IMR-90 (cell line): ENCODE measurements at regions of chr1 and their contacts with region 1.

Region 1: GRCh38 chr1:186212544-186213226 is 162.4 kb downstream of the TPR start:
- DNase-seq: peak; percentile 97
- ATAC-seq: peak; percentile 94
- H3K4me3 ChIP-seq: no peak overlapping the region
- H3K27ac ChIP-seq: no peak overlapping the region
- H3K4me1 ChIP-seq: peaks cover 5% of the 10 kb centered on the region; the same call in 1 of the 2 replicates
- H3K27me3 ChIP-seq: no peaks in the 10 kb centered on the region
- CTCF ChIP-seq: peak; percentile 97
- POLR2A ChIP-seq: peak; percentile 55; the same call in 1 of the 2 replicates
- RAD21 ChIP-seq: peak; percentile 100

Region 2: DNA sequence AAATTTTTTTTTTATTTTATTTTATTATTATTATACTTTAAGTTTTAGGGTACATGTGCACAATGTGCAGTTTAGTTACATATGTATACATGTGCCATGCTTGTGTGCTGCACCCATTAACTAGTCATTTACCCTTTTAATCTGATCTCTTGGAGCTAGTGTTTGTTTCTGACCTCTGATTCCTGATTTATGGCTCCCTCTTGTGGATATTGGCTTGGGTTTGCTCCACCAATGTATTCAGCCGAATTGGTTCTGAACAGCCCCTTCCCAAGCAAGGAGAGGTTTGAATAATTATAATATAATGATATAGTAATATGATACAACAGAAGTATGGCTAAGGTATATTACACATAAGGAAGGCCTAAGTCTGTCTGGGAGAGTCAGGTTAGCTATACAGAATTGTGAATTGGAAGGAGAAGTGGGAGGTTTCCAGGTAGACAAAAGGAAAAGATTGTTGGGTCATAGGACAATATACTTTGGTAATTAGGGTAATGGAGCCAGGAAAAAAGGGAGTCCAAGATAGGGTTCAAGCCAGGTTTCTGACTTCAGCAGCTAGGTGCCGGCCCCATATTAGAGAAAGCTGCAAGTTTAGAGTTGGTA is 531.6 kb before region 1 on chr1:
- CTCF ChIA-PET with region 1: interaction called, 3 read pairs
- POLR2A ChIA-PET with region 1: no interaction called
- dilution Hi-C with region 1: no loop called
- in situ Hi-C with region 1: no loop called
- intact Hi-C with region 1: loop called (anchors 1 kb)
- DNase-seq: peak; percentile 44
- ATAC-seq: peak; percentile 71
- H3K4me3 ChIP-seq: no peak overlapping the region
- H3K27ac ChIP-seq: no peak overlapping the region
- H3K4me1 ChIP-seq: no peaks in the 10 kb centered on the region
- H3K27me3 ChIP-seq: no peaks in the 10 kb centered on the region
- CTCF ChIP-seq: peak; percentile 67
- POLR2A ChIP-seq: no peak
- RAD21 ChIP-seq: peak; percentile 67

Region 3: GRCh38 chr1:185720633-185721272 is 491.9 kb before region 1 on chr1:
- CTCF ChIA-PET with region 1: interaction called, 9 read pairs
- POLR2A ChIA-PET with region 1: no interaction called
- dilution Hi-C with region 1: no loop called
- in situ Hi-C with region 1: loop called (anchors 10 kb)
- intact Hi-C with region 1: loop called (anchors 1 kb)
- DNase-seq: peak; percentile 64
- ATAC-seq: peak; percentile 49
- H3K4me3 ChIP-seq: no peak overlapping the region
- H3K27ac ChIP-seq: no peak overlapping the region
- H3K4me1 ChIP-seq: peaks cover 4% of the 10 kb centered on the region
- H3K27me3 ChIP-seq: no peaks in the 10 kb centered on the region
- CTCF ChIP-seq: peak; percentile 57
- POLR2A ChIP-seq: no peak
- RAD21 ChIP-seq: peak; percentile 51

Region 4: DNA sequence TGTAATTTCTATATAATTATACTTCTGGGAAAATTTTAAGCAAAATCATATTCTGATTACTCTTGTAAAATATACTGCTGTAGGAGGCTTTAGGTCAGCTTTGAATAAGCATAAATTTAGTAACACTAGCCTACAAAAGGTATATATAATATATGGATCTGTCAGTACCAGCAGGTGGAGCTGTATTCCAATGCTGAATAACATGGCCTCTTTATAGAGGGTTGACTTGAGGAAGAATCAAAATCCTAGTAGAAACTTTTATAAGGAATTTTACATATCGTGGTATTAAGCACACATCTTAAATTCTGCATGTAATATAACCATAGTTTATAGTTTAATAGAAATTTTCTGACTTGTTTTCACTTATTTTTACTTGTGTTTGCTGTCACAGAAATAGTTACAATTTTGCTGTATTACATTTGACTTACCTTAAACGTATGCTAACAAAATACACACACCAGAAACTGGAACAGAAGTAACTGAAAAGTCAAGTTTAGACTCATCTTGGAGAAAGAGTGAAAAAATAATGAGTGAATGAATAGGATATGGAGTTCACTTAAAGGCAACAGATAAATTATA is 399.2 kb before region 1 on chr1:
- CTCF ChIA-PET with region 1: interaction called, 3 read pairs
- POLR2A ChIA-PET with region 1: no interaction called
- dilution Hi-C with region 1: no loop called
- in situ Hi-C with region 1: loop called (anchors 5 kb)
- intact Hi-C with region 1: loop called (anchors 1 kb)
- DNase-seq: peak; percentile 73
- ATAC-seq: peak; percentile 87
- H3K4me3 ChIP-seq: no peak overlapping the region
- H3K27ac ChIP-seq: no peak overlapping the region
- H3K4me1 ChIP-seq: no peaks in the 10 kb centered on the region
- H3K27me3 ChIP-seq: no peaks in the 10 kb centered on the region
- CTCF ChIP-seq: peak; percentile 72
- POLR2A ChIP-seq: no peak
- RAD21 ChIP-seq: peak; percentile 80

Region 5: GRCh38 chr1:185926562-185926961 is 286.1 kb before region 1 on chr1:
- CTCF ChIA-PET with region 1: no interaction called
- POLR2A ChIA-PET with region 1: no interaction called
- dilution Hi-C with region 1: no loop called
- in situ Hi-C with region 1: no loop called
- intact Hi-C with region 1: loop called (anchors 5 kb)
- DNase-seq: no peak
- ATAC-seq: no peak
- H3K4me3 ChIP-seq: no peak overlapping the region
- H3K27ac ChIP-seq: no peak overlapping the region
- H3K4me1 ChIP-seq: peaks cover 5% of the 10 kb centered on the region
- H3K27me3 ChIP-seq: no peaks in the 10 kb centered on the region
- CTCF ChIP-seq: no peak
- POLR2A ChIP-seq: no peak
- RAD21 ChIP-seq: no peak

Region 6: GRCh38 chr1:186076006-186076405 is 136.7 kb before region 1 on chr1:
- CTCF ChIA-PET with region 1: no interaction called
- POLR2A ChIA-PET with region 1: no interaction called
- dilution Hi-C with region 1: no loop called
- in situ Hi-C with region 1: no loop called
- intact Hi-C with region 1: no loop called
- DNase-seq: peak; percentile 7
- ATAC-seq: no peak
- H3K4me3 ChIP-seq: no peak overlapping the region
- H3K27ac ChIP-seq: no peak overlapping the region
- H3K4me1 ChIP-seq: no peaks in the 10 kb centered on the region; the same call in 1 of the 2 replicates
- H3K27me3 ChIP-seq: no peaks in the 10 kb centered on the region
- CTCF ChIP-seq: no peak
- POLR2A ChIP-seq: no peak
- RAD21 ChIP-seq: no peak

Region 7: GRCh38 chr1:186155594-186155993 is 57.1 kb before region 1 on chr1:
- CTCF ChIA-PET with region 1: interaction called, 4 read pairs
- POLR2A ChIA-PET with region 1: no interaction called
- dilution Hi-C with region 1: no loop called
- in situ Hi-C with region 1: no loop called
- intact Hi-C with region 1: loop called (anchors 1 kb)
- DNase-seq: peak; percentile 80
- ATAC-seq: peak; percentile 86
- H3K4me3 ChIP-seq: no peak overlapping the region
- H3K27ac ChIP-seq: no peak overlapping the region
- H3K4me1 ChIP-seq: peaks cover 4% of the 10 kb centered on the region; the same call in 1 of the 2 replicates
- H3K27me3 ChIP-seq: no peaks in the 10 kb centered on the region
- CTCF ChIP-seq: peak; percentile 74
- POLR2A ChIP-seq: no peak
- RAD21 ChIP-seq: peak; percentile 73